ENCODE measurements at regions of chr5 and their contacts with region 1.

Region 1: GRCh38 chr5:170638454-170639220 is 134.8 kb downstream of the KCNIP1 start:
- DNase-seq: peak in 4 of 5 donors; percentile 64 to 84 (median 78)
- H3K4me3 ChIP-seq: no peak overlapping the region
- H3K27ac ChIP-seq: no peak overlapping the region
- H3K4me1 ChIP-seq: peaks cover 0 to 10% (median 8%) of the 10 kb centered on the region in 3 donors
- H3K27me3 ChIP-seq: no peaks in the 10 kb centered on the region
- CTCF ChIP-seq: peak; percentile 83

Region 2: GRCh38 chr5:170791325-170791954 is 152.8 kb after region 1 on chr5:
- intact Hi-C with region 1: loop called (anchors 10 kb)
- DNase-seq: peak in 4 of 5 donors; percentile 77 to 87 (median 84)
- H3K4me3 ChIP-seq: no peak overlapping the region
- H3K27ac ChIP-seq: no peak overlapping the region
- H3K4me1 ChIP-seq: peaks cover 0 to 10% (median 0%) of the 10 kb centered on the region in 3 donors
- H3K27me3 ChIP-seq: no peaks in the 10 kb centered on the region
- CTCF ChIP-seq: peak; percentile 81

Measured in kidney (tissue), 22 donors.